Vagina (tissue), 2 donors: ENCODE measurements at regions of chr22 and their contacts with region 1.

Region 1: DNA sequence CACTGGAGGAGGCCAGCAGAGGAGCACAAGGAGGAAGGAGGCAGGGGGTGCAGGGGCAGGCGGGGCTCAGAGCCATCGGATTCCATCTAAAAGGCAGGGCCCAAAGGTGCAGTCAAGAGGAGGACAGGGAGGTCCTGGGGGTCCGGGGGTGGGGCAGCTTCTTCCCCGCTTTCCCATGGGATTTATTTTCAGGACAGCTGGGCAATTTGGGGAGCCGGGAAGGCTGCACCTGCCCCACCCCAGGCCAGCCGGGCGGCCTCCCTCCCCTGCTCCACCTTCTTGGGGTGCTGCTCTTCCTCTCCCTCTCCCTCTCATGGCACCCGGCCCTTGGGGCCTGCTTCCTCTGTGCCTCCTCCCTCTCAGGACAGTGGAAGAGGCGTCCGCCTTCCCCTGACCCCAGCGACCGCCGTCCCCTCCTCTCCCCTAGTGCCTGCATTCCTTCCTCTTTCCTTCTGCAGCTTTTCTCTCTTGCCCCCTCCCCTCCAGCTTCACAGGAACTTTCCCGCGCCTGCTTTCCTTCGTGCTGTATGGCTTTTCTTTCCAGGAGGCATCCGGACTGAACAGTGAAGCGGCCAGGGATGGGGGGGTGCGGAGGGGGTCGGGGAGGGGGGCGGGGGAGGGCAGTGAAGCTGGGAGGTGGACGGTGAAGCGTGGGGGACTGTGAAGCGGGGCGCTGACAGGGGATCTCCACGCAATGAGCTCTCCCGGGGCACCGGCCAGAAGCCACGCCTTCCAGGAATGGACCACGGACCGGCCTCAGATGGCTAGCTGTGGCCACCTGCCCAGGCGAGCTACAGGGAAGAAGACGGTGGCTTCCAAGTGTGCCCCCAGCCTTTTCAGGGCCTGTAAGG is 26.9 kb downstream of the APOBEC3H start:
- DNase-seq: no peak
- H3K4me3 ChIP-seq: no peak overlapping the region
- H3K27ac ChIP-seq: no peak overlapping the region
- H3K4me1 ChIP-seq: peaks cover 7% of the 10 kb centered on the region
- H3K27me3 ChIP-seq: no peaks in the 10 kb centered on the region
- CTCF ChIP-seq: no peak
- POLR2A ChIP-seq: no peak

Region 2: DNA sequence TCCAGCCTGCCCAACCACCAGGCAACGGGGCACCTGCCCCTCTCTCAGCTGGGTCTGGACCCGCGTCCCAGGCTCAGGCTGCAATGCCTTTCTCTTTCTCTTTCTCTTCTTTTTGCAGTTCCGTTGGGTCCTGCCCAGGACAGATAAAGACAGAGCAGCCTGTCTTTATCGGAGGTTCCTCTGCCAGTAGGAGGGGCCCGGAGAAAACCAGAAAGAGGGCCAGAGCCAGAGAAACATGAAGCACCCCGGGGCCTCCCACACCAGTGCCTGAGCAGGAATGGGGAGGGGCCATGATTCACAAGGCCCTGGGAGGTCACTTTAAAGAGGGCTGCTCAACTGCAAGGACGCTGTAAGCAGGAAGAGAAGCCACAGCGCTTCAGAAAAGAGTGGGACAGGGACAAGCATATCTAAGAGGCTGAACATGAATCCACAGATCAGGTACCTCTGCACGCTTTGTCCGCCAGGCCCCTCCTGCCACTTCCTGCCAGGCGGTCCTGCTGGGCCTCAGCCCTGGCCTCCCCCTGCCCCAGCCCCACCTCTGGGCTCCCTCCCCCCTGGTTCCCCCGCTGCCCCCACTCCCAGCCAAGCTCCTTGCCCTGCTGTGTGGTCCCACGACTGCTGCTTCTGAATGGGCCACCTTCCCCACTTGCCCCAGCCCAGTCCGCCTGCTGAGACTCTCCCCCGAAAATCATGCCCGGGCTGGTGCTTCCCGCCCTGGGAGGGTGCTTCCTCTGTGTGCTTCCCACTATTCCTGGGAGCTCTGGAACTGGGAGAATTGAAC is 109.8 kb before region 1 on chr22 and contains the start of gene APOBEC3C:
- intact Hi-C with region 1: loop called (anchors 10 kb)
- DNase-seq: peak in 1 of 2 donors; percentile 93
- H3K4me3 ChIP-seq: peak within 1 kb of the TSS; percentile 51 to 67
- H3K27ac ChIP-seq: peak within 1 kb of the TSS; percentile 84
- H3K4me1 ChIP-seq: peaks cover 18% of the 10 kb centered on the region
- H3K27me3 ChIP-seq: no peaks in the 10 kb centered on the region
- CTCF ChIP-seq: no peak
- POLR2A ChIP-seq: peak in 1 of 2 donors; percentile 57
- total RNA-seq, gene APOBEC3C: 16.2 TPM

Region 3: GRCh38 chr22:39152511-39153219 is 28.7 kb after region 1 on chr22 and contains the start of gene CBX7:
- intact Hi-C with region 1: no loop called
- DNase-seq: peak in 1 of 2 donors; percentile 93
- H3K4me3 ChIP-seq: peak within 1 kb of the TSS; percentile 95 to 100
- H3K27ac ChIP-seq: peak within 1 kb of the TSS; percentile 99
- H3K4me1 ChIP-seq: peaks cover 55% of the 10 kb centered on the region
- H3K27me3 ChIP-seq: no peaks in the 10 kb centered on the region
- CTCF ChIP-seq: no peak
- POLR2A ChIP-seq: peak in 1 of 2 donors; percentile 92
- total RNA-seq, gene CBX7: 98.0 TPM

Region 4: GRCh38 chr22:39170825-39171622 is 47.0 kb after region 1 on chr22:
- intact Hi-C with region 1: no loop called
- DNase-seq: no peak
- H3K4me3 ChIP-seq: peak overlapping the region; percentile 9 to 19
- H3K27ac ChIP-seq: peak overlapping the region; percentile 30
- H3K4me1 ChIP-seq: peaks cover 51% of the 10 kb centered on the region
- H3K27me3 ChIP-seq: no peaks in the 10 kb centered on the region
- CTCF ChIP-seq: peak; percentile 88 to 99 (median 90)
- POLR2A ChIP-seq: no peak

Region 5: GRCh38 chr22:39545386-39546365 is 421.7 kb after region 1 on chr22:
- intact Hi-C with region 1: no loop called
- DNase-seq: no peak
- H3K4me3 ChIP-seq: no peak overlapping the region
- H3K27ac ChIP-seq: no peak overlapping the region
- H3K4me1 ChIP-seq: no peaks in the 10 kb centered on the region
- H3K27me3 ChIP-seq: no peaks in the 10 kb centered on the region
- CTCF ChIP-seq: no peak
- POLR2A ChIP-seq: no peak